OCI-LY7 (cell line): ENCODE measurements at regions of chr4 and their contacts with region 1.

Region 1: GRCh38 chr4:175176710-175177109 is 258.6 kb downstream of the ADAM29 start:
- DNase-seq: no peak
- H3K4me3 ChIP-seq: no peak overlapping the region
- H3K27ac ChIP-seq: no peak overlapping the region
- H3K4me1 ChIP-seq: peaks cover 12% of the 10 kb centered on the region
- CTCF ChIP-seq: no peak

Region 2: DNA sequence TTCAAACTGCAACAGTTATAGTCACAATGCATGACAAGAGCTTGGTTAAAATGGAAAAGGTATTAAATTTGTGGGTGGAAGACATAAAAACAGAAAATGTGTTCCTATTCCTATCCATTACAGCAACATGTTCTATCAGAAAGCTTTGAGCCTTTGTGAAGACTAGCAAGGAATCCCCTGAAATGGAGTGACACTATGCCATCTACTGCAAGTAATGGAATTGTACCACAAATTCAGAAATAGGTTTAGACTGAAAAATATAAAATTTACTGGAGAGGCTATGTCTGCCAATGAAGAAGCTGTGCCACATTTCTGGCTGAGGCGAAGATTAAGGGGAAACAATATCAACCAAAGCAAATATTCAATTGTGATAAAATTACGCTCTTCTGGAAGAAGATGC is 10.7 kb before region 1 on chr4:
- CTCF ChIA-PET with region 1: no interaction called
- POLR2A ChIA-PET with region 1: interaction called, 19 read pairs
- intact Hi-C with region 1: no loop called
- DNase-seq: peak; percentile 24
- H3K4me3 ChIP-seq: no peak overlapping the region
- H3K27ac ChIP-seq: no peak overlapping the region
- H3K4me1 ChIP-seq: peaks cover 10% of the 10 kb centered on the region
- CTCF ChIP-seq: 0 out of 2 replicates have a peak, but pooled peaks have one; percentile 24

Region 3: GRCh38 chr4:175234177-175234576 is 57.5 kb after region 1 on chr4:
- CTCF ChIA-PET with region 1: no interaction called
- POLR2A ChIA-PET with region 1: no interaction called
- intact Hi-C with region 1: no loop called
- DNase-seq: no peak
- H3K4me3 ChIP-seq: no peak overlapping the region
- H3K27ac ChIP-seq: no peak overlapping the region
- H3K4me1 ChIP-seq: no peaks in the 10 kb centered on the region
- CTCF ChIP-seq: no peak

Region 4: GRCh38 chr4:175935016-175935661 is 758.4 kb after region 1 on chr4:
- CTCF ChIA-PET with region 1: no interaction called
- POLR2A ChIA-PET with region 1: interaction called, 10 read pairs
- intact Hi-C with region 1: no loop called
- DNase-seq: no peak
- H3K4me3 ChIP-seq: no peak overlapping the region
- H3K27ac ChIP-seq: no peak overlapping the region
- H3K4me1 ChIP-seq: no peaks in the 10 kb centered on the region
- CTCF ChIP-seq: no peak